ENCODE measurements at regions of chr20 and their contacts with region 1.

Region 1: GRCh38 chr20:3820048-3820900 is at the start of gene AP5S1:
- DNase-seq: peak; percentile 95 to 98 (median 96)
- H3K4me3 ChIP-seq: peak within 1 kb of the TSS; percentile 69 to 96 (median 87)
- H3K4me3 Mint-ChIP-seq: peak within 1 kb of the TSS; percentile 83 to 86
- H3K27ac ChIP-seq: peak within 1 kb of the TSS; percentile 87 to 97
- H3K27ac Mint-ChIP-seq: peak within 1 kb of the TSS; percentile 95 to 99 (median 98)
- H3K4me1 ChIP-seq: peaks cover 18 to 30% of the 10 kb centered on the region in 2 donors
- H3K4me1 Mint-ChIP-seq: peaks cover 20% of the 10 kb centered on the region
- H3K27me3 ChIP-seq: no peaks in the 10 kb centered on the region
- H3K27me3 Mint-ChIP-seq: peaks cover 0 to 2% (median 0%) of the 10 kb centered on the region in 3 donors
- CTCF ChIP-seq: peak; percentile 99
- polyA plus RNA-seq, gene AP5S1: 6.6 to 10.8 (median 8.6) TPM

Region 2: GRCh38 chr20:3767427-3768341 is 52.6 kb before region 1 on chr20 and contains the start of gene ADISSP:
- intact Hi-C with region 1: loop called (anchors 10 kb)
- DNase-seq: peak; percentile 97 to 98 (median 97)
- H3K4me3 ChIP-seq: peak within 1 kb of the TSS; percentile 85 to 96 (median 86)
- H3K4me3 Mint-ChIP-seq: peak within 1 kb of the TSS; percentile 85 to 95
- H3K27ac ChIP-seq: peak within 1 kb of the TSS; percentile 83 to 91
- H3K27ac Mint-ChIP-seq: peak within 1 kb of the TSS; percentile 85 to 94 (median 93)
- H3K4me1 ChIP-seq: peaks cover 56 to 65% of the 10 kb centered on the region in 2 donors
- H3K4me1 Mint-ChIP-seq: peaks cover 59% of the 10 kb centered on the region
- H3K27me3 ChIP-seq: no peaks in the 10 kb centered on the region
- H3K27me3 Mint-ChIP-seq: peaks cover 0 to 2% (median 0%) of the 10 kb centered on the region in 3 donors
- CTCF ChIP-seq: no peak
- polyA plus RNA-seq, gene ADISSP: 59.6 to 78.5 (median 68.5) TPM

Region 3: DNA sequence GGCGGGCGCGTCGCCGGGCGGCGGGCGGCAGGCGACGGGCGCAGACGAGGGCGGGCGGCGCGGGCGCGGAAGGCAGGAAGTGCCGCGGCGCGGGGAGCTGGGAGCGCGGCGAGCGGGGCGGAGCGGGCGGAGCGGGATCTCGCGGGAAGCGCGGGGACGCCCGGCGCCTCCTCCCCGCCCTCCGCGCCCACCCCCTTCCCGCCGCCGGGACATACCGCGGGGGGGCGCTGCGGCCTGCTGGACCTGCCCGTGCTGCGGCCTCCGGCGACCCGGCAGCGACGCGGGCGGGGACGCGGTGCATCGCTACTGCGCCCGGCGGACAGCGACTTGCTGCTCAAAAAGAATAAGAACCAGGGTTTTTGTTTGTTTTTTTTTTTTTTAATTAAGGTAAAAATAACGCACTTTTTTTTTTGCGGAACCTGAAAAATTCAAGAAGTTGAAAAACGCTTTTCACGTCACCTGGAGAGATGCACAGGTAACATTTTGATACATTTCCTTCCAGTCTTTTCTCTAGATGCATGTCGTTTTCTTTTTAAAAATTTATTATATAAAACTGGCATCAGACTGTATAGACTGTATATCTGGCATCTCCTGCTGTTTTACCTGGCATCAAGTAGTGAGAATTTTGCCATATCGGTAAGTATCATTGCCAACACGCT is 33.5 kb before region 1 on chr20 and contains the start of gene CENPB:
- intact Hi-C with region 1: loop called (anchors 2 kb)
- DNase-seq: peak; percentile 85 to 89 (median 86)
- H3K4me3 ChIP-seq: peak within 1 kb of the TSS; percentile 52 to 79 (median 73)
- H3K4me3 Mint-ChIP-seq: peak within 1 kb of the TSS; percentile 87 to 94
- H3K27ac ChIP-seq: peak within 1 kb of the TSS; percentile 30 to 58
- H3K27ac Mint-ChIP-seq: peak within 1 kb of the TSS; percentile 68 to 91 (median 86)
- H3K4me1 ChIP-seq: peaks cover 26 to 39% of the 10 kb centered on the region in 2 donors
- H3K4me1 Mint-ChIP-seq: peaks cover 31% of the 10 kb centered on the region
- H3K27me3 ChIP-seq: no peaks in the 10 kb centered on the region
- H3K27me3 Mint-ChIP-seq: peaks cover 0 to 2% (median 1%) of the 10 kb centered on the region in 3 donors
- CTCF ChIP-seq: peak; percentile 90
- polyA plus RNA-seq, gene CENPB: 1.1 to 18.9 (median 1.4) TPM

Region 4: DNA sequence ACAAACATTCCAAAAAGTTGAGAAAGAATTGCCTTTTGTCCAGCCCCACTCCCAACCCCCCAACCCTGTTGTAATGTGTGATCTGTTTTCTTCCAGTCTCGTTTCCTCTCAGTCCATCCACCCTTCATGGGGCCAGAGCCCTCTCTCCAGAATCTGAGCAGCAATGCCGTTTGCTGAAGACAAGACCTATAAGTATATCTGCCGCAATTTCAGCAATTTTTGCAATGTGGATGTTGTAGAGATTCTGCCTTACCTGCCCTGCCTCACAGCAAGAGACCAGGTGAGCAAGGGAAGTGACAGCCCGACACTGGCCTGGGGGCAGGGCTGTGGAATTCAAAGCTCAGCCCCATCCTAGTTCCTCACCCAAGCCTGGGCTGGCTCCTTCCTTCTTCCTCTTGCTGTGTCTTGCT is 34.2 kb after region 1 on chr20:
- intact Hi-C with region 1: no loop called
- DNase-seq: peak in 2 of 3 donors; percentile 11 to 17
- H3K4me3 ChIP-seq: no peak overlapping the region
- H3K4me3 Mint-ChIP-seq: peak overlapping the region in 1 of 2 donors; percentile 56
- H3K27ac ChIP-seq: peak overlapping the region; percentile 42 to 61
- H3K27ac Mint-ChIP-seq: peak overlapping the region; percentile 33 to 89 (median 82)
- H3K4me1 ChIP-seq: peaks cover 17 to 18% of the 10 kb centered on the region in 2 donors
- H3K4me1 Mint-ChIP-seq: peaks cover 22% of the 10 kb centered on the region
- H3K27me3 ChIP-seq: no peaks in the 10 kb centered on the region
- H3K27me3 Mint-ChIP-seq: peaks cover 0 to 3% (median 2%) of the 10 kb centered on the region in 3 donors
- CTCF ChIP-seq: no peak